ENCODE measurements at regions of chr1 and their contacts with region 1.

Region 1: GRCh38 chr1:30085811-30086770 is 637.3 kb downstream of the MATN1 start:
- DNase-seq: no peak
- H3K4me3 ChIP-seq: no peak overlapping the region
- H3K27ac ChIP-seq: no peak overlapping the region
- H3K4me1 ChIP-seq: peaks cover 14% of the 10 kb centered on the region
- H3K27me3 ChIP-seq: no peaks in the 10 kb centered on the region
- CTCF ChIP-seq: peak; percentile 38 to 73

Region 2: DNA sequence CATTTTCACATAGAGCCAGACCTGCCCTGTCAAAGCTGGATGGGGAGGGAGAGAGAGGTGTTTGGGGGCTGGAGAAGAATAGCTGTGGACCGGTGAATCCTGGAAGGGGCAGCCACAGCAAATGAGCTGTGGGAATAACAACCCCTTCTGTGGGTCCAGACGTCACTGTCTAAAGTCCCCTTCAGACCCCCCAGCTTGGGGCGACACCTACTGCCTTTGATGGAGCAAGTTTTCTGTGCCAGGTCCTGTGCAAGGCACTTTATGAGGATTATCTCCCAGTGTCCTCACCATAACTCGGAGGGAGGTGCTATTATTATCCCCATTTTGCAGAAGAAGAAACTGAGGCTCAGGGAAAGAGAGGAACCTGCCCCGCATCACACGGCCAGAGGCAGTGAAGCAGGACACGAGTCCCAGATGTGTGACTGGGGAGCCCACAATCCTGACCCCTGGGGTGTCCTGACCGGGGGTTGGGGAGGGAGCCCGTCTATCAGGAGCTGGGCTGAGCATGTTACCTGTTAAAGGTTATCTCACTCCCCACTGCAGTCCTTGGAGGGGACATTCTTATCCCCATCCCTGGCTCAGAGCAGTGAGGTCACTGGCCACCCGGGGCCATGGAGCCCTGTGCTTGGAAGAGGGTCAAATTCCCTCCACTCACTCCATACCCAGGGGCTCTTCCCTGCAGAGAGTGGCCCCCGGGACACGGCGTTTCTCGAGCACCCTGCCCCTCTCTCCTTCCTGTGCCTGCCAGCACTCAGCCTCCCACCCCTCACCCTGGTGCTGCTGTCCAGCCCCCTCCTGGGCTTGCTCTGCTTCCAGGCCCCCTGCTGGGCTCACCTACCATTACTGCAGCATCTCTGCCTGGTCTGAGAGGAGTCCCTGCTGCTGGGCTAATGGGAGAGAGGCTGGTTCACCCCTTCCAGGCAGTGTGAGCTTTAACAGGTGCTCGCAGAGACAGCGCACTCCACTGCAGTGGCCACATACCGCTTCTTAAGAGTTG is 716.9 kb before region 1 on chr1:
- CTCF ChIA-PET with region 1: no interaction called
- dilution Hi-C with region 1: no loop called
- in situ Hi-C with region 1: no loop called
- intact Hi-C with region 1: loop called (anchors 10 kb)
- DNase-seq: no peak
- H3K4me3 ChIP-seq: no peak overlapping the region
- H3K27ac ChIP-seq: no peak overlapping the region
- H3K4me1 ChIP-seq: no peaks in the 10 kb centered on the region
- H3K27me3 ChIP-seq: no peaks in the 10 kb centered on the region
- CTCF ChIP-seq: peak in 1 of 2 donors; percentile 24

Region 3: GRCh38 chr1:29793101-29793546 is 293.0 kb before region 1 on chr1:
- CTCF ChIA-PET with region 1: no interaction called
- dilution Hi-C with region 1: no loop called
- in situ Hi-C with region 1: loop called in 1 of 2 experiments (anchors 10 kb)
- intact Hi-C with region 1: loop called (anchors 1 kb)
- DNase-seq: peak; percentile 65
- H3K4me3 ChIP-seq: no peak overlapping the region
- H3K27ac ChIP-seq: no peak overlapping the region
- H3K4me1 ChIP-seq: peaks cover 9% of the 10 kb centered on the region
- H3K27me3 ChIP-seq: peaks cover 3% of the 10 kb centered on the region
- CTCF ChIP-seq: peak; percentile 94 to 97

Region 4: DNA sequence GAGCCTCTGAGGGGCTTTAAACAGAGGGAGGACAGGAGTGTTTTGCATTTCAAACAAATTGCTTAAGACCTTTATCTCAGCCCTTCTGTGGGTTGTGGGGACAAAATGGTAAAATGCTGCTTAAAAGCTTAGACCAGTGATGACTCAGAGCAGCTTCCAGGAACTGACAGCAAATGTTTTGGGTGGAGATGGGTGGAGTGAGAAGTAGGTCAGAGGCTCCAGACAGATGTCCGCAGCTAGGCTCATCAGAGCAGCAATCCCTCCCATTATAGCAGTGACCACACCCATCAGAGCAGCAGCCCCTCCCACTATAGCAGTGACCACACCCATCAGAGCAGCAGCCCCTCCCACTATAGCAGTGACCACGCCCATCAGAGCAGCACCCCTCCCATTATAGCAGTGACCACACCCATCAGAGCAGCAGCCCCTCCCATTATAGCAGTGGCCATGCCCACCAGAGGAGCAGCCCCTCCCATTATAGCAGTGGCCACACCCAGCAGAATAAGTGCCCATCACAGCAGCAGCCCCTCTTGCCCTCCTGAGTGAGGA is 105.1 kb after region 1 on chr1:
- CTCF ChIA-PET with region 1: no interaction called
- dilution Hi-C with region 1: loop called (anchors 5 kb)
- in situ Hi-C with region 1: no loop called
- intact Hi-C with region 1: no loop called
- DNase-seq: no peak
- H3K4me3 ChIP-seq: no peak overlapping the region
- H3K27ac ChIP-seq: no peak overlapping the region
- H3K4me1 ChIP-seq: no peaks in the 10 kb centered on the region
- H3K27me3 ChIP-seq: no peaks in the 10 kb centered on the region
- CTCF ChIP-seq: no peak